ENCODE measurements at regions of chr9 and their contacts with region 1.

Region 1: DNA sequence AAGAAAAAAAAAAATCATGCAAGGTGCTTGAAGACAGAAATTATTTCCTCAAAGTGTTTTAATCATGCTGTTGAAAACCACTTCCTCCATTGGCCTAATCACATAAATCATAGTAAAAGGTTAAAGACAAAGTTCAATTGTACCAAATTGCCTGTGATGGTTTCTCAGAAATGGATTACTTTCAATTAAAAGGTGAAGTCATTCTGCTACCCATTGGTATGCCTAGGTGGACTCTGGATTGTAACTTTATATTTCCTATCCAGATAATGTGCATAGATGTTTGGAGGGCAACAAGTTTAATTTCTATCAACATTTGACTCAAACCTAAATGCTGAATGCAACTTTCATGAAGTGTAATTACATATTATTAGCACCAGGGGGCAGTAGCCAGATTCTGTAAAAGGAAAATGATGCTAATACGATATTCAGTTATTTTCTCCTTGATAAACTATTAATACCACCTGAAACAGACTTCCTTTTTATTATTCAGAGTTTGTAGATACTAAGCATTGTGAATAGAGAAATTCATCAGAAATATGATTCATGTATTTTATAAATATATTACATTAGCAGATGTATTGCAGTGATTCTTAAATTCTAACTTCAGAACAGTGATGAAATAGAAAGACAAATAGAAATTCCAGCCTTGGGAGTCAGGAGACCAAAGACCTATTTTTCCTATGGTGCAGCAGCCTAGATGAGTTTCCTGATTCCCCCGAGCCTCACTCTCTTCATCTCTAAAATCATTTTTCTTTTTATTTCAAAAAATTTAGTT is 148.2 kb downstream of the CAAP1 start:
- DNase-seq: peak in 1 of 2 donors; percentile 44
- H3K4me3 ChIP-seq: no peak overlapping the region
- H3K27ac ChIP-seq: no peak overlapping the region
- H3K4me1 ChIP-seq: no peaks in the 10 kb centered on the region
- H3K27me3 ChIP-seq: no peaks in the 10 kb centered on the region
- CTCF ChIP-seq: peak in 5 of 7 experiments; percentile 13 to 78 (median 68)
- EP300 ChIP-seq: no peak
- POLR2A ChIP-seq: no peak

Region 2: GRCh38 chr9:26513730-26514129 is 230.6 kb before region 1 on chr9:
- intact Hi-C with region 1: no loop called
- DNase-seq: no peak
- H3K4me3 ChIP-seq: no peak overlapping the region
- H3K27ac ChIP-seq: no peak overlapping the region
- H3K4me1 ChIP-seq: no peaks in the 10 kb centered on the region
- H3K27me3 ChIP-seq: no peaks in the 10 kb centered on the region
- CTCF ChIP-seq: no peak
- EP300 ChIP-seq: no peak
- POLR2A ChIP-seq: no peak

Region 3: GRCh38 chr9:26975693-26976059 is 231.3 kb after region 1 on chr9:
- intact Hi-C with region 1: loop called (anchors 5 kb)
- DNase-seq: peak; percentile 38 to 42
- H3K4me3 ChIP-seq: no peak overlapping the region
- H3K27ac ChIP-seq: no peak overlapping the region
- H3K4me1 ChIP-seq: peaks cover 0 to 9% (median 0%) of the 10 kb centered on the region in 4 donors
- H3K27me3 ChIP-seq: no peaks in the 10 kb centered on the region
- CTCF ChIP-seq: peak in 5 of 7 experiments; percentile 24 to 60 (median 35)
- EP300 ChIP-seq: no peak
- POLR2A ChIP-seq: no peak

Measured in stomach (tissue), 19 donors.